ENCODE measurements at regions of chr17 and their contacts with region 1.

Region 1: DNA sequence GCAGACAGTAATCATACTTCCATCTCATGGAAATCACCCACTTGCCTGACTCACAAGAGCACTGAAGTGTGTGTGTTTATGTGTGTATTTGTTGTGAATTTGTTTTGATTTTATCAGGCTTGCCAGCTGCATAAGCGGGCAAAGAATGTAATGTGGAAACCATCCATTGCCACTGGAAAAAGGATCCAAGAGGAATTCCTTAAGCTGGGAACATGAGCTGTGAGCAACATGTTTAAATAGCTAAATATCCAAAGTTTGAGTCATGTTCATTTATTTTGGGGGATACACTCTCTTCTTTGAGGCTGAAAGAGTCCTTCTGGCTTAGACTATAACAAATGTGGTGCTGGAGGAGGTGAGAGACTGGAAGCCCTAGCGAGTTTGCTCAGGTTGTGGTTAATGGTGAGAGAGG is 198.4 kb upstream of the TBX2 start:
- DNase-seq: peak; percentile 92
- H3K4me3 ChIP-seq: peak overlapping the region; percentile 15; the same call in 1 of the 2 replicates
- H3K27me3 ChIP-seq: no peaks in the 10 kb centered on the region
- CTCF ChIP-seq: no peak

Region 2: DNA sequence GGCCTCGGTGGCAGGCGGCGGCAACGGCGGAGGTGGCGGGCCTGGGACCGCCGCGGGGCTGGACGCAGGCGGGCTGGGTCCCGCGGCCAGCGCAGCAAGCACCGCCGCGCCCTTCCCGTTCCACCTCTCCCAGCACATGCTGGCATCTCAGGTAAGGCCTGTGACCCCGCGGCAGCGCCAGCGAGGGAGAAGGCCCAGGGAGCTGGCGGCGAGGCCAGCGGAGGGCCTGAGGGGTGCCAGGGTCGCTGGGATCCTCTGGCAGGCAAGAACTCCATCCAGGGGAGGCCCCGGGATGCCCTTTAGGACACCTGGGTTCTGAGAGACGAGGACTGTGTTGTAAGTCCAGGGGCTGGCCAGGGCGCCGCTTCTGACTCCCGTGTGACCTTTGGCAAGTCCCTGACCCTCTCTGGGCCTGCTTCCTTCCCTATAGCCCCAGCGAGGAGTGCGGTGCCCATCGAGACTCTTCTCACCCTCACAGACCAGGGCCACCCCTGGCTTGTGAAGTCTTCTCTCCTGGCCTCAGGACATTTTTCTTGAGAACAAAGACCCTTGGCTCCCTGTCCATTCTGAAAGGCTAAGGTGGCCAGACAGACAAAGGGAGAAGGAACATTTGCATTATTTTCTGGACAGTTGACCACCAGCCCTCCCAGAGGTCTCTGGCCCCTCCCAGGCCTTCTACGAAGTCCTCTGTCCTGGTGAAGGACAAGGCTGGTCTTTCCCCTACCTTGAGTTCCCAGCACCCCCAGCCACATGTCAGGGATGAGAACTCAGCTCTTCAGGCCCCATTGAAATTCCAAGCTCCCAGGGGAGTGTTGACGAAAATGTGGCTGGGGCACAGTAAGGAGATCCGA is 204.7 kb after region 1 on chr17:
- CTCF ChIA-PET with region 1: interaction called, 3 read pairs
- POLR2A ChIA-PET with region 1: interaction called, 10 read pairs
- DNase-seq: no peak
- H3K4me3 ChIP-seq: peak overlapping the region; percentile 78
- H3K27me3 ChIP-seq: no peaks in the 10 kb centered on the region
- CTCF ChIP-seq: no peak